SK-N-SH (cell line): ENCODE measurements at regions of chr19 and their contacts with region 1.

Region 1: DNA sequence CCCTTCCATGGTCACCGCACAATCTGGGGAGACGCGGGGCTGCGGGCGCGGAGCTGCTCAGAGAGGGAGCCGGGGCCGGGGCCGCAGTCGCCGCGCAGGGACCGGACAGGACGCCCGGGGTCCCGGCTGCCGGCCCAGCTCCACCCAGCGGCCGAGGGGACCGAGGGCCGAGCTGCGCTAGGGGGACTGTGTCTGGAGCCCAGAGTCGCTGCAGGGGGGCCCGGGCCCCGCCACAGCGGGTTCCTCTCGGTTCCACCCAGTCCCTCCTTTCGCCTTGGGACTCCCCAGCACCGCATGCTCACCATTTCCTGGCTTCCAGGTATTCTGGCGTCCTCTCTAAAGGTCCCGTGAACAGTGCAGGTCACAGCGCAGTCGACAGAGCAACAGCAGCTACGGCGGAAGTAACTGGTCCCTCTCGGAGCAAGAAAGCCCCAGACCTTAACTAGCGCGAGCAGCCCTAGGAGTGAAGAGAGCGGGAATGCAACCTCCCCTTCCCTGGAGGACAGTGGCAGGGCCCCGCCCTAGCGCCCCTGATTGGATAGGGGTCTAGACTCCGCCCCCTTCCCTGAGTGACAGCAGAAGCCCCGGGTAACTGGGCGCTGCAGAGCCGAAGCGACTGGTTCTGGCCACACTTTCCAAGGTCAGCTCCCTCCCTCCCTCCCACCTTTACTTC is at the start of gene ZNF878:
- DNase-seq: peak; percentile 96
- H3K4me3 ChIP-seq: peak within 1 kb of the TSS; percentile 58 to 69
- H3K27ac ChIP-seq: peak within 1 kb of the TSS in 1 of 2 experiments; percentile 66; a peak in 2 of 4 replicates
- H3K4me1 ChIP-seq: no peaks in the 10 kb centered on the region; a peak in 1 of 4 replicates
- H3K27me3 ChIP-seq: no peaks in the 10 kb centered on the region
- CTCF ChIP-seq: peak; percentile 33
- EP300 ChIP-seq: no peak
- RAD21 ChIP-seq: no peak
- polyA plus RNA-seq, gene ZNF878: 0.05 TPM in 1 of 2 replicates, not detected in the other

Region 2: GRCh38 chr19:12035220-12036153 is 17.1 kb before region 1 on chr19 and contains the start of gene ZNF433:
- CTCF ChIA-PET with region 1: interaction called, 4 read pairs
- POLR2A ChIA-PET with region 1: interaction called, 23 read pairs
- DNase-seq: peak; percentile 97
- H3K4me3 ChIP-seq: peak within 1 kb of the TSS; percentile 62 to 86
- H3K27ac ChIP-seq: peak within 1 kb of the TSS; percentile 44 to 56; a peak in 3 of 4 replicates
- H3K4me1 ChIP-seq: peaks cover 0 to 3% of the 10 kb centered on the region in 2 experiments; a peak in 1 of 4 replicates
- H3K27me3 ChIP-seq: no peaks in the 10 kb centered on the region
- CTCF ChIP-seq: no peak
- EP300 ChIP-seq: no peak
- RAD21 ChIP-seq: 0 out of 2 replicates have a peak, but pooled peaks have one; percentile 7
- polyA plus RNA-seq, gene ZNF433: 1.9 and 2.1 TPM in 2 replicates